Cardiac septum (tissue), 1 donor: ENCODE measurements at regions of chr3 and their contacts with region 1.

Region 1: DNA sequence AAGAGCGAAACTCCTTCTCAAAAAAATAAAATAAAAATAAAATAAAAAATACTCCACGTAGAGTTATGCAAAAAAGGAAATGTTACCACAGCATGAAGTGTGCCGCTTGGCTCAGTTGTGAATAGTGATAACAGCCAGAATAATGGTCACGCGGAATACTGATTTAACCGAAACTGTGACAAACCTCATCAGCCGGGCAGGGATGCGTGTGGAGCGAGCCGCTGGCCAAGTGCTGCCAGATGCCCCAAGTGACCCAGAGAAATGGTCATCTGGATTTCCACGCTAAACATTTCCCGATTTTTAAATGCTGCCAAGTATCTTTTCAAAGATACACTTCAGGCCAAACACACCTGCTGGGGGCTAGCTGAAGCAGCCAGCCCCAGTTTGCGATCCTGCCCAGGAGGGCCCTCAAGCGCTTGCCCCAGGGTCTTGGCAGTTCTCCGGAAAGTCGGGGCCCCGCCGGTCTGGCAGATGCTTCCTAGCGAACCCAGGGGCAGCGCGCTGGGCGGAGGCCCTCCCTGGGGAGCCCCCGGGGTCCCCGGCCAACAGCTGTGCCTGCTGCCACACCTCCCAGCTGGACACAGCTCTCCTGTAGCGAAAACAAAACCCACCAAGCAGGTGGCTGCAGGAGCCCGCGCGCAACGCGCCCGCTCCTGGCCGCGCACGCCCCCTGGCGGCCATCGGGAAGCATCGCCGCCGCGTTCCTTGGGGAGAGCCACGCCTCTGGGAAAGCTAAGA is 35.1 kb downstream of the CMTM6 start:
- DNase-seq: peak; percentile 91

Region 2: GRCh38 chr3:32296256-32297204 is 171.0 kb before region 1 on chr3:
- intact Hi-C with region 1: loop called (anchors 5 kb)
- DNase-seq: peak; percentile 80

Region 3: GRCh38 chr3:32374788-32375595 is 92.5 kb before region 1 on chr3:
- intact Hi-C with region 1: loop called (anchors 1 kb)
- DNase-seq: no peak

Region 4: DNA sequence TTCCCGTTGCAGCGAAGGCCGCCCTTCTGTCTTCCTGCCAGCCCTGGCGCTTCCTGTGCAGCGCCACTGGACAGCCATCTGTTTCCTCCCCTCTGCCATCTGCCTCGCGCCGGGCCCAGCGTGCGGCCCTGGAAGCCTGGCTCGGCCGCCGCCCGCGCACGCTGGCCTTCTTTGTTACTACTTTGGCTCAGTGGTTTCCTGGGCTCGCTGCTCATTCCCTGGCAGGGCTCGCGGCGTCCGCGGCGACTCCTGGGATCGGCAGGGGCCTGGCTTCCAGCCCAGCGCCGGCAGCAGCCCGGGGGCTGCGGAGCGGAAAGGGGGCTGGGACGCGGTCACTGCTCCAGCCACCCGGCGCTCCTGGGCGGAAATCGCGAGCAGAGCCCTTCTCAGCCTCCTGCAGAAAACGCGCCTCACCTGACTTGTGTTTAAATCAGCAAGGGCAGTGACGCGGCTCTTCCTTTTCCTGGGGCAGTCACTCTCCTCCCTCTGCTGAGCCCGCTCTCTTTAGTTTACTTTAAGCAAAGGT is 65.9 kb before region 1 on chr3:
- intact Hi-C with region 1: loop called (anchors 2 kb)
- DNase-seq: peak; percentile 90